ENCODE measurements at regions of chr1 and their contacts with region 1.

Region 1: GRCh38 chr1:245888809-245889208 is 618.3 kb downstream of the SMYD3 start:
- DNase-seq: peak; percentile 85
- H3K4me3 Mint-ChIP-seq: no peak overlapping the region
- H3K27ac Mint-ChIP-seq: no peak overlapping the region
- H3K4me1 Mint-ChIP-seq: no peaks in the 10 kb centered on the region
- H3K27me3 Mint-ChIP-seq: no peaks in the 10 kb centered on the region
- CTCF ChIP-seq: peak; percentile 49

Region 2: DNA sequence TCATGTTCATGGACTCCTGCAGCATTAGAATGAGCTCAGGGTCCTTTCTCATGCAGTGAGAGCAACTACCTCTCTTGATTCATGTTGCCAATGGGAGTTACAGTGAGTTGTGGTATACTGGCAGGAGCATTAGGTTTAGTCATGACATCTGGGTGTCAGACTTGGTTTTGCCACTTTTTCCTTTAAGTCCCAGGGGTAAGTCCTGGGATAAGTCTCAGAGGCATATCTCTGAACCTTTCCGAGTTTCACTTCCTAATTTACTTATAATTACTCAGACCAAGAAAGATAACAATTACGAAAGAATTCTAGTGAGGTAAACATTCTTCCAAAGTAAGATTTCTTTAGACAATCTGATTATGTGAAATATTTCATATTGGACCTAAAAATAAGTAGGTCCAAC is 12.2 kb after region 1 on chr1:
- CTCF ChIA-PET with region 1: interaction called, 19 read pairs
- POLR2A ChIA-PET with region 1: no interaction called
- intact Hi-C with region 1: no loop called
- DNase-seq: no peak
- H3K4me3 Mint-ChIP-seq: no peak overlapping the region
- H3K27ac Mint-ChIP-seq: no peak overlapping the region
- H3K4me1 Mint-ChIP-seq: no peaks in the 10 kb centered on the region
- H3K27me3 Mint-ChIP-seq: no peaks in the 10 kb centered on the region
- CTCF ChIP-seq: no peak

Measured in MCF 10A (cell line).